B cell (primary cell): ENCODE measurements at regions of chr5 and their contacts with region 1.

Region 1: GRCh38 chr5:61658592-61659008 is 326.5 kb downstream of the ZSWIM6 start:
- DNase-seq: peak; percentile 77
- ATAC-seq: peak; percentile 76
- H3K4me3 ChIP-seq: no peak overlapping the region
- H3K4me3 Mint-ChIP-seq: no peak overlapping the region
- H3K27ac ChIP-seq: no peak overlapping the region
- H3K27ac Mint-ChIP-seq: no peak overlapping the region
- H3K4me1 ChIP-seq: no peaks in the 10 kb centered on the region
- H3K4me1 Mint-ChIP-seq: no peaks in the 10 kb centered on the region
- H3K27me3 ChIP-seq: no peaks in the 10 kb centered on the region
- H3K27me3 Mint-ChIP-seq: peaks cover 17% of the 10 kb centered on the region
- CTCF ChIP-seq: peak; percentile 97

Region 2: DNA sequence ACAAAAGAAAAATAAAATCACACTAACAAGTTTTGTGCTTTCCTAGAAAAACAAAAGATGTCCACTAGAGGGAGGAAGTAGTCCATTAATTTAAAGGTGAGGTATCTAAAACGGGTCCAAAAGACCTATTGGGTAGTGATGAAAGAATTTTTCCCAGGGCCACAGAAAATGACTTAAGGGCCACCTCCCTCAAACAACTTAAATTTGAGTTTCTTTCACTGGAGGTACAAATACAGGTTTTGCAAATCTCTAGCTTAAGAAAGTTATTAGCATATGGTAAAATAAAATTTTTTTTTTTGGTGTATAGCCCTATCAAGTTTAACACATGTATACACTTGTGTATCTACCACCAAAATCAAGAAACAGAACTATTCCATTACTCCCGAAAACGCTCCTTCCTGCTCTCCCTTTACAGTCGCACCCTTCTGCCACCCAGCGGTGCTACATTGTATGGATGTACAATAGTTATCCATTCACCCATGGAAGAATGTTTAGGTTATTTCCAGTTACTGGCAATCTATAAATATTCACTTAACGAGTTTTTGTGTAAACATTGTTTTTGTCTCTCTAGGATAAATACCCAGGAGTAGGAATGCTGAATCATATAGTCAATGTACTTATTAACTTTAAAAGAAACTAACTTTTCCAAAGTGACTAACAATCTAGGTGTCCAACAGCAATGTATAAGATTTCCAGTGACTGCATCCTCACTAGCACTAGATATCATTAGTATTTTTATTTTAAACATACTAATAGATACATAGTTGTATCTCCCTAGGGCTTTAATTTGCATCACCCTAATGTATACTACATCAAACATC is 980.5 kb before region 1 on chr5:
- CTCF ChIA-PET with region 1: interaction called, 12 read pairs
- POLR2A ChIA-PET with region 1: no interaction called
- intact Hi-C with region 1: no loop called
- DNase-seq: peak; percentile 54
- ATAC-seq: no peak
- H3K4me3 ChIP-seq: no peak overlapping the region
- H3K4me3 Mint-ChIP-seq: no peak overlapping the region
- H3K27ac ChIP-seq: no peak overlapping the region
- H3K27ac Mint-ChIP-seq: no peak overlapping the region
- H3K4me1 ChIP-seq: no peaks in the 10 kb centered on the region
- H3K4me1 Mint-ChIP-seq: peaks cover 2% of the 10 kb centered on the region
- H3K27me3 ChIP-seq: no peaks in the 10 kb centered on the region
- H3K27me3 Mint-ChIP-seq: no peaks in the 10 kb centered on the region
- CTCF ChIP-seq: peak; percentile 73

Region 3: GRCh38 chr5:60960591-60960990 is 698.0 kb before region 1 on chr5:
- CTCF ChIA-PET with region 1: interaction called, 65 read pairs
- POLR2A ChIA-PET with region 1: no interaction called
- intact Hi-C with region 1: no loop called
- DNase-seq: no peak
- ATAC-seq: no peak
- H3K4me3 ChIP-seq: no peak overlapping the region
- H3K4me3 Mint-ChIP-seq: no peak overlapping the region
- H3K27ac ChIP-seq: no peak overlapping the region
- H3K27ac Mint-ChIP-seq: no peak overlapping the region
- H3K4me1 ChIP-seq: no peaks in the 10 kb centered on the region
- H3K4me1 Mint-ChIP-seq: peaks cover 5% of the 10 kb centered on the region
- H3K27me3 ChIP-seq: no peaks in the 10 kb centered on the region
- H3K27me3 Mint-ChIP-seq: no peaks in the 10 kb centered on the region
- CTCF ChIP-seq: peak; percentile 69

Region 4: GRCh38 chr5:61055434-61056006 is 603.1 kb before region 1 on chr5:
- CTCF ChIA-PET with region 1: interaction called, 99 read pairs
- POLR2A ChIA-PET with region 1: no interaction called
- intact Hi-C with region 1: loop called (anchors 1 kb)
- DNase-seq: peak; percentile 54
- ATAC-seq: no peak
- H3K4me3 ChIP-seq: no peak overlapping the region
- H3K4me3 Mint-ChIP-seq: no peak overlapping the region
- H3K27ac ChIP-seq: no peak overlapping the region
- H3K27ac Mint-ChIP-seq: no peak overlapping the region
- H3K4me1 ChIP-seq: no peaks in the 10 kb centered on the region
- H3K4me1 Mint-ChIP-seq: no peaks in the 10 kb centered on the region
- H3K27me3 ChIP-seq: no peaks in the 10 kb centered on the region
- H3K27me3 Mint-ChIP-seq: no peaks in the 10 kb centered on the region
- CTCF ChIP-seq: peak; percentile 82

Region 5: GRCh38 chr5:61167382-61167781 is 491.2 kb before region 1 on chr5:
- CTCF ChIA-PET with region 1: interaction called, 13 read pairs
- POLR2A ChIA-PET with region 1: no interaction called
- intact Hi-C with region 1: loop called (anchors 2 kb)
- DNase-seq: peak; percentile 12
- ATAC-seq: no peak
- H3K4me3 ChIP-seq: no peak overlapping the region
- H3K4me3 Mint-ChIP-seq: no peak overlapping the region
- H3K27ac ChIP-seq: no peak overlapping the region
- H3K27ac Mint-ChIP-seq: no peak overlapping the region
- H3K4me1 ChIP-seq: peaks cover 8 to 10% of the 10 kb centered on the region in 2 donors
- H3K4me1 Mint-ChIP-seq: peaks cover 13% of the 10 kb centered on the region
- H3K27me3 ChIP-seq: no peaks in the 10 kb centered on the region
- H3K27me3 Mint-ChIP-seq: no peaks in the 10 kb centered on the region
- CTCF ChIP-seq: no peak

Region 6: DNA sequence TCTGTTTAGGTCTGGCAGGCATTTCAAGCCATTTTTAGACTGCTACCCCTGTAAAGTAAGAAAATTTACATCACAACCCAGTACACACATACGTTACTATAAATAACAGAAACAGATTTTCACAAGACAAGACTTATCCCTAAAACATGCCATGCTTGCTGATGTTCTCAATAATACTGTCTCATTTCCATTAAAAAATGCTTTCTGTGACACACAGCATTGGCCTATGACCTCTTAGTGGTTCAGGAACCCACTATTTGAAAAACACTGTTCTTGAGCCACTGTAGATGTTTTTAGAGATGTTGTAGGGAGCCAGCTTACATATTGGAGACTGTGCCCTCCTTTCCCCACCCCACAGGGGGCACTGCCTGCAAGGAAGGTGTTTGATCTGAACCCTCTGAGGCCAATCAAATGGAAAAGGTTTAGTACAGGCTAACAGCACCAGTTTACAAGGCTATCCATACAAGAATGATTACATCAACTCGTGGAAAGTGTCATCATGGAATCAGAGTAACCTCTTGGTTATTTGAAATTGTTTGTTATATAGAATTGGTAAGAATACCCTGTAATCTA is 295.7 kb before region 1 on chr5:
- CTCF ChIA-PET with region 1: interaction called, 6 read pairs
- POLR2A ChIA-PET with region 1: no interaction called
- intact Hi-C with region 1: loop called (anchors 1 kb)
- DNase-seq: no peak
- ATAC-seq: no peak
- H3K4me3 ChIP-seq: no peak overlapping the region
- H3K4me3 Mint-ChIP-seq: no peak overlapping the region
- H3K27ac ChIP-seq: no peak overlapping the region
- H3K27ac Mint-ChIP-seq: no peak overlapping the region
- H3K4me1 ChIP-seq: peaks cover 9 to 12% of the 10 kb centered on the region in 2 donors
- H3K4me1 Mint-ChIP-seq: peaks cover 36% of the 10 kb centered on the region
- H3K27me3 ChIP-seq: no peaks in the 10 kb centered on the region
- H3K27me3 Mint-ChIP-seq: no peaks in the 10 kb centered on the region
- CTCF ChIP-seq: no peak

Region 7: DNA sequence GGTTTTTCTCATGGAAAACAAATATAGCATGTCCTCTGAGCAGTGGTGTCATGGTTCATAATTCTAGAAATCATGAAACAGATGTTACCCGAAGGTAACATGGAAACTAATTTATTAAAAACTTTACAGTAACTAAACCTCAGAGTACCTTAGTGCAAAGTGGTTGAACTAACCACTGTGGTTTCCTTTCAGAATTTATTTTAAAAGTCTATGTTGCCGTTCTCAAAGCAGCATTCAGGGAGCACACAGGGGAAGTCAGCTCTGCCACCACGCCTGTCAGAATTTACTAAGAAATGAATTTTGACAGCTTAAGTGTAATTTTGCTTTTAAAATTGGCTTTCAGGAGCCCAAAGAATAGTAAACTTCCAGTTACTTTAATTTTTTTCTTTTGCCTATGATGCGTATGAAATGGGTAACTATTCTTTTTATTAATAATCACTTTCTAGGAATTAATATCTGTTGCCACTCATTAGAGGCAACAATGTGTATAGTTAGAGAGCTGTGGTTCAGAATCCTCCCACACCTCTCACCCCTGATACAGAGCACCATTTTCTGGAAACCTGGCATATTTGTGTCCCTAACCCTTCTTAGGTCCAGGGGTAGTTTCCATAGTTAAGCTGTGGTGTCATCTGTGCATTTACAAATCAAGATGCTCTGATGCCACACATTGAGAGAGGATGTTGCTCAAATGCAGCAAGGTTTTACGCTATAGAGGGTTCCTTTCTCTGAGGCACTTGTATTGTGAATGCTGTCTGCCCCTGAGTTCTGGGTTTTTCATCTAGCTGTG is 123.9 kb before region 1 on chr5:
- CTCF ChIA-PET with region 1: no interaction called
- POLR2A ChIA-PET with region 1: no interaction called
- intact Hi-C with region 1: no loop called
- DNase-seq: peak; percentile 2
- ATAC-seq: no peak
- H3K4me3 ChIP-seq: no peak overlapping the region
- H3K4me3 Mint-ChIP-seq: no peak overlapping the region
- H3K27ac ChIP-seq: no peak overlapping the region
- H3K27ac Mint-ChIP-seq: no peak overlapping the region
- H3K4me1 ChIP-seq: peaks cover 3 to 6% of the 10 kb centered on the region in 2 donors
- H3K4me1 Mint-ChIP-seq: peaks cover 10% of the 10 kb centered on the region
- H3K27me3 ChIP-seq: no peaks in the 10 kb centered on the region
- H3K27me3 Mint-ChIP-seq: no peaks in the 10 kb centered on the region
- CTCF ChIP-seq: no peak

Region 8: DNA sequence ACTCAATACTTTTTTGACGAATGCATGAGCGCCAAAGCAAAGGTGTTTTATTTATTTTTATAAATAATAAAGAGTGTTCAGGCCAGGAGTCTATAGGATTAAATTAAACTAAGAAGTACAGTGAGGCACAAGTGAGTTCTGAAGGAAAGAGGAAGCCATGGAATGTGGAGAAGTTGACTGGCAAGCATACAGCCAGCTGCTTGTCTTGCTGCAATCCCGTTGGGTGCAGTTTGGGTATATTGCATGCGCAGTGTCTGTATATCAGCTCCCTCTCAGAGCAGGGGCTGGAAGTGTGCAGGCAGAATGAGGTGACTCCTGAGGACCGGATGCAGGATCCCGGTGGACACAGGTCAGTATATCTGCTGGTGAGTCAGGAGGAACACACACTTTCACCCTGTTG is 10.9 kb before region 1 on chr5:
- CTCF ChIA-PET with region 1: interaction called, 32 read pairs
- POLR2A ChIA-PET with region 1: no interaction called
- intact Hi-C with region 1: no loop called
- DNase-seq: no peak
- ATAC-seq: no peak
- H3K4me3 ChIP-seq: no peak overlapping the region
- H3K4me3 Mint-ChIP-seq: no peak overlapping the region
- H3K27ac ChIP-seq: no peak overlapping the region
- H3K27ac Mint-ChIP-seq: no peak overlapping the region
- H3K4me1 ChIP-seq: no peaks in the 10 kb centered on the region
- H3K4me1 Mint-ChIP-seq: no peaks in the 10 kb centered on the region
- H3K27me3 ChIP-seq: no peaks in the 10 kb centered on the region
- H3K27me3 Mint-ChIP-seq: peaks cover 19% of the 10 kb centered on the region
- CTCF ChIP-seq: no peak